Left lung (tissue), 14 donors: ENCODE measurements at regions of chr20 and their contacts with region 1.

Region 1: GRCh38 chr20:44388466-44389023 is 33.0 kb downstream of the HNF4A start:
- DNase-seq: peak in 3 of 4 donors; percentile 48 to 85 (median 62)
- ATAC-seq: peak; percentile 91
- H3K4me3 ChIP-seq: no peak overlapping the region
- H3K27ac ChIP-seq: no peak overlapping the region
- H3K4me1 ChIP-seq: peaks cover 0 to 5% of the 10 kb centered on the region in 2 donors
- H3K27me3 ChIP-seq: peaks cover 0 to 34% of the 10 kb centered on the region in 2 donors
- CTCF ChIP-seq: peak; percentile 65 to 72

Region 2: GRCh38 chr20:44210422-44211176 is 177.9 kb before region 1 on chr20 and contains the start of gene OSER1:
- intact Hi-C with region 1: loop called in 1 of 2 experiments (anchors 10 kb)
- DNase-seq: peak; percentile 96 to 99 (median 98)
- ATAC-seq: peak; percentile 93
- H3K4me3 ChIP-seq: peak within 1 kb of the TSS; percentile 93 to 98
- H3K27ac ChIP-seq: peak within 1 kb of the TSS; percentile 96 to 97
- H3K4me1 ChIP-seq: peaks cover 27 to 61% of the 10 kb centered on the region in 2 donors
- H3K27me3 ChIP-seq: no peaks in the 10 kb centered on the region
- CTCF ChIP-seq: peak in 1 of 2 donors; percentile 17
- polyA plus RNA-seq, gene OSER1: 34.4 to 44.8 (median 39.3) TPM

Region 3: GRCh38 chr20:44431502-44432234 is 43.1 kb after region 1 on chr20:
- intact Hi-C with region 1: no loop called
- DNase-seq: no peak
- ATAC-seq: no peak
- H3K4me3 ChIP-seq: no peak overlapping the region
- H3K27ac ChIP-seq: no peak overlapping the region
- H3K4me1 ChIP-seq: no peaks in the 10 kb centered on the region
- H3K27me3 ChIP-seq: peaks cover 0 to 31% of the 10 kb centered on the region in 2 donors
- CTCF ChIP-seq: no peak

Region 4: GRCh38 chr20:44460795-44461141 is 72.2 kb after region 1 on chr20:
- intact Hi-C with region 1: loop called in 1 of 2 experiments (anchors 5 kb)
- DNase-seq: peak in 1 of 4 donors; percentile 48
- ATAC-seq: peak; percentile 49
- H3K4me3 ChIP-seq: no peak overlapping the region
- H3K27ac ChIP-seq: no peak overlapping the region
- H3K4me1 ChIP-seq: no peaks in the 10 kb centered on the region
- H3K27me3 ChIP-seq: no peaks in the 10 kb centered on the region
- CTCF ChIP-seq: peak in 1 of 2 donors; percentile 33

Region 5: GRCh38 chr20:44609511-44610312 is 221.2 kb after region 1 on chr20:
- intact Hi-C with region 1: loop called in 1 of 2 experiments (anchors 10 kb)
- DNase-seq: peak; percentile 75 to 93 (median 89)
- ATAC-seq: peak; percentile 100
- H3K4me3 ChIP-seq: peak overlapping the region in 1 of 2 donors; percentile 13
- H3K27ac ChIP-seq: peak overlapping the region; percentile 28 to 72
- H3K4me1 ChIP-seq: peaks cover 7 to 30% of the 10 kb centered on the region in 2 donors
- H3K27me3 ChIP-seq: no peaks in the 10 kb centered on the region
- CTCF ChIP-seq: peak; percentile 91 to 97